ENCODE measurements at regions of chr7 and their contacts with region 1.

Region 1: GRCh38 chr7:106865130-106866041 is at the start of gene PIK3CG:
- DNase-seq: no peak
- ATAC-seq: peak; percentile 83
- H3K4me3 Mint-ChIP-seq: peak within 1 kb of the TSS; percentile 91
- H3K27ac Mint-ChIP-seq: peak within 1 kb of the TSS; percentile 90
- H3K4me1 Mint-ChIP-seq: peaks cover 71% of the 10 kb centered on the region
- H3K27me3 Mint-ChIP-seq: no peaks in the 10 kb centered on the region
- CTCF ChIP-seq: no peak
- total RNA-seq, gene PIK3CG: 62.0 and 63.6 TPM in 2 replicates

Region 2: DNA sequence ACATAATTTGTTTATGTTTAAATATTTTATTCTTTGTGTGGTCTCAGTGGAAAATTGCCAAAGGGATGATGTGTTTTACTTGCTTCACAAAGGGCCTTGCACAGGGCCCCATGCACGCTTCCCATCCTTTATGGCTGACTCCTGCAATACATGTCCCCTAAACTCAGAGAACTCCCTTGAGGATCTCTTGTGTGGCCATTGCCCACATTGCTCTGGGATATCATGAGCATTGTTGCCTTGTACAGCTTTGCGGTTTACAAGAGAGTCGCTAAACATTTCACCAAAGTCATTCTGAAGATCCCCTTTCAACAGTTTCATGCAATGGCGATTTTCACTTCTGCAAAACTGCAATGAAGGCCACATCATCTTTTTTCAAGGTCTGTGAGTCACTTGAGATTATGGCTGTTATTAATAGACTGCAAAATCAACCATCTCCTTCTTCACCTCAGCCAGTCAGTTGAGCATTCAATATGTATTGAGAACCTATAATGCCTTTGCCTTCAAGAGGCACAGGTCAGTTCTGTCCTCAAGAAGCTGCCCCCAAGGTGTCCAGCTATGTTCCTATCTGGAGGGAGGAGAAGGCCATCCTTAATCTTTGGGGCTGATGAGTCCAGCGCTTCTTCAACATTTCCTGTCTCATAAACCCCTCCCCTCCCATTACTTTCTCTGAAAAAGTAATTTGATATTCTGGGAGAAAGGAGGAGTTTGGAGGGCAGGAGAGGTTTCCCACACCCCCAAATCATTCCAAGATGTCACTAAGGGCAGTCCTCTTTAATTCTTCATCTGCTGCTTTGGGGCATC is 312.5 kb before region 1 on chr7:
- CTCF ChIA-PET with region 1: no interaction called
- POLR2A ChIA-PET with region 1: no interaction called
- intact Hi-C with region 1: loop called (anchors 5 kb)
- DNase-seq: peak; percentile 27
- ATAC-seq: peak; percentile 92
- H3K4me3 Mint-ChIP-seq: peak overlapping the region; percentile 39
- H3K27ac Mint-ChIP-seq: peak overlapping the region; percentile 89
- H3K4me1 Mint-ChIP-seq: peaks cover 39% of the 10 kb centered on the region
- H3K27me3 Mint-ChIP-seq: no peaks in the 10 kb centered on the region
- CTCF ChIP-seq: no peak

Region 3: DNA sequence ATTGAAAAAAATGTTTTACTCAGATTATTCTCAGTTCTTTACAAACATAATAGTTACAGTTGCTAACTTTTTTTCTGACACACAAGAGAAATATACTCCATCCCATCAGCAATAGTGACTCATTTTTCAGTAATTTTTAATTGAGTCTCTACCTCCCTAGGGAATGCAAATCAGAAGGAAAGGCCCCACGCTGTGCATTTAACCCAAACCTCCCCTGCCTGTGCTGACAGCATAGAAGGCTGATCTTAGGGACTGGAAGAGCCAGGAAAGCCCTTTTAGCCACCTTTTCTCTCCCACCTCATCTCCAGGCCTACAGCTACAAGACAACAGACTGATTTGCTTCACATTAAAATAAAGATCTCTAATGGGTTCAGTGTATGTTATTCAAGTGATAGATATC is 25.0 kb before region 1 on chr7:
- CTCF ChIA-PET with region 1: no interaction called
- POLR2A ChIA-PET with region 1: interaction called, 5 read pairs
- intact Hi-C with region 1: loop called (anchors 1 kb)
- DNase-seq: no peak
- ATAC-seq: peak; percentile 82
- H3K4me3 Mint-ChIP-seq: no peak overlapping the region
- H3K27ac Mint-ChIP-seq: peak overlapping the region; percentile 38
- H3K4me1 Mint-ChIP-seq: peaks cover 29% of the 10 kb centered on the region
- H3K27me3 Mint-ChIP-seq: no peaks in the 10 kb centered on the region
- CTCF ChIP-seq: no peak

Region 4: GRCh38 chr7:106883456-106884026 is 18.2 kb after region 1 on chr7:
- CTCF ChIA-PET with region 1: no interaction called
- POLR2A ChIA-PET with region 1: interaction called, 14 read pairs
- intact Hi-C with region 1: loop called (anchors 1 kb)
- DNase-seq: no peak
- ATAC-seq: peak; percentile 95
- H3K4me3 Mint-ChIP-seq: peak overlapping the region; percentile 58
- H3K27ac Mint-ChIP-seq: peak overlapping the region; percentile 61
- H3K4me1 Mint-ChIP-seq: peaks cover 45% of the 10 kb centered on the region
- H3K27me3 Mint-ChIP-seq: no peaks in the 10 kb centered on the region
- CTCF ChIP-seq: no peak

Region 5: DNA sequence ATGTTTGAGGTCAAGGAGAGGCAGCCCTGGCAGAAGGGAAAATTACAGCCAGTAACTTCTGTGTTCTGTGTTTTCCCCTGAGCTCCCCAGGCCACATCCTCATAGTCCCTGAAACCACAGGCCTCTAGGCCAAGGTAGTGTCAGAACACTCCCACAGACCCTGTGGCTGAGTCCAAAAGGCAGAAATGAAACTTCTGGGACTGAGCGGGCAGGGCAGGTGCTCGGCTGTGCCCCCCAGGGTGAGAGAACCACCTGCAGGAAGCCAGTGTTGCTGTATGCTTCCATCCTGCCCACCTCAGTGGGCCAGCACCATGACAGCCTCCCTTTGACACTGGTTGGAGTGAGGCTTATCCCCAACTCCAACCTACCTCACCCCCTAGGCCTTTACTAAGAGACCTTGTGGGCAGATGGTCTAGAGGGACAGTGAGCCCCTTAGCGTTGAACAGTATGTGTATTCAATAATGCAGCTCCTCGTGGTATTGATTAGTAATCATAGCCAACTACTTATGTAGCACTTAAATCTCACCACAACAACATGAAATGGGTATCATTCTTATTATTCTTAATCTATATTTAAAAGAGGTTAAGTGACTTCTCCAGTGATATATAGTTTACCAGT is 30.0 kb after region 1 on chr7:
- CTCF ChIA-PET with region 1: interaction called, 4 read pairs
- POLR2A ChIA-PET with region 1: interaction called, 15 read pairs
- intact Hi-C with region 1: loop called (anchors 1 kb)
- DNase-seq: peak; percentile 42
- ATAC-seq: peak; percentile 93
- H3K4me3 Mint-ChIP-seq: peak overlapping the region; percentile 46
- H3K27ac Mint-ChIP-seq: peak overlapping the region; percentile 82
- H3K4me1 Mint-ChIP-seq: peaks cover 77% of the 10 kb centered on the region
- H3K27me3 Mint-ChIP-seq: no peaks in the 10 kb centered on the region
- CTCF ChIP-seq: no peak